ENCODE measurements at regions of chr3 and their contacts with region 1.

Region 1: GRCh38 chr3:23999012-23999641 is 54.0 kb downstream of the NR1D2 start:
- DNase-seq: peak; percentile 79 to 97
- H3K4me3 ChIP-seq: no peak overlapping the region
- CTCF ChIP-seq: peak in 2 of 3 donors; percentile 26 to 98
- POLR2A ChIP-seq: no peak

Region 2: GRCh38 chr3:23981955-23982354 is 17.2 kb before region 1 on chr3:
- intact Hi-C with region 1: no loop called
- DNase-seq: no peak
- H3K4me3 ChIP-seq: no peak overlapping the region
- CTCF ChIP-seq: no peak
- POLR2A ChIP-seq: no peak

Region 3: GRCh38 chr3:24145981-24146822 is 147.1 kb after region 1 on chr3:
- intact Hi-C with region 1: no loop called
- DNase-seq: no peak
- H3K4me3 ChIP-seq: no peak overlapping the region
- CTCF ChIP-seq: no peak
- POLR2A ChIP-seq: no peak

Region 4: DNA sequence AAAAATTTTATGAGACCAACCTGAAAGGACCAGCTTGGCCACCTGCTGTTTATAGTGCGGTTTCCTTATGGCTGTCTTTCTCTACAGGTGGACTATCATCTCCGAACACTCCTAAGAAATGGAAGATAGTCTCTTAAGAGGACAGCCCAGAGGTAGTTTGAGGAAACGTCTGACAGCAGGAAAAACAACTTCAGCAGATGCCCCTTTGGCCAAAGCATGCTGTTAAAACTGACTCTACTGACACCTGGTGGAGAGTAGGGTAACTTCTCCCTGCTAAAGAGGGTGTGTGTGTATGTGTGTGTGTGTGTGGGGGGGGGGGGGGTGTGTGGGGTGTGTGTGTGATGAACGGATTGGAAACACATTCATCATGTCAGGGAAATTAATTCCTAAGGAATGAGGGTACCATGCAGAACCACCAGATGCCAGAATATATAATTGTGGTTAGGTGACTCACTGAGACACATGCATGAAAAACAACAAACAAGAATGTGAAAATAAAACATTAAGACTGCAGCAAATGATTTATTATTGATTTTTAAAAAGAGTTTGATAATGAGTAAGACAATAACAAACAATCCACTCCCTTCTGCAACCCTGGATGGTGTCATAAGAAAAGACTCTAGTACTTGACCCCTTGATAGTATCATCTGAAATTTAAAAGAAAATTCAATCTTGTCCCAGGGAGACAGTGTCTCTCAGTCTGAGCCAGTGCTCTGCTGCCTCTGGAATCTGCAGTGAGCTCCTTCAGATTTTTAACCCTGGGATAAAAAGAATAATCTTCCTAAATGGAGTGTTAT is 239.0 kb after region 1 on chr3:
- intact Hi-C with region 1: loop called (anchors 5 kb)
- DNase-seq: peak in 1 of 2 donors; percentile 64
- H3K4me3 ChIP-seq: no peak overlapping the region
- CTCF ChIP-seq: no peak
- POLR2A ChIP-seq: no peak

Region 5: GRCh38 chr3:24680214-24680967 is 681.3 kb after region 1 on chr3:
- intact Hi-C with region 1: loop called (anchors 10 kb)
- DNase-seq: no peak
- H3K4me3 ChIP-seq: no peak overlapping the region
- CTCF ChIP-seq: no peak
- POLR2A ChIP-seq: no peak

Measured in lower leg skin (tissue), 4 donors.